ENCODE measurements at regions of chr21 and their contacts with region 1.

Region 1: GRCh38 chr21:35520302-35520701 is 471.2 kb upstream of the RUNX1 start:
- DNase-seq: no peak
- H3K4me3 ChIP-seq: no peak overlapping the region
- CTCF ChIP-seq: no peak

Region 2: DNA sequence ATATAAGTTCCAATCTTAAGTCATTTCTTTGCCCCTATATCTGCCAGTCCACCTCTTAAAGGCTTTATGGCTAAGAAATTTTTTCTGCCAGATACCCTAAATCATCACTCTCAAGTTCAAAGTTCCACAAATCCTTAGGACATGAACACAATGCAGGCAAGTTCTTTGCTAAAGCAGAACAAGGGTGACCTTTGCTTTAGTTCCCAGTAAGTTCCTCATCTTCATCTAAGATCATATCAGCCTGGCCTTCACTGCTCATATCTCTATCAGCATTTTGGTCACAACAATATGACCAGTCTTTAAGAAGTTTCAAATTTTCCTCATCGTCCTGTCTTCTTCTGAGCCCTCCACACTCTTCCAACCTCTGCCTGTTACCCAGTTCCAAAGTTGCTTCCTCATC is 69.0 kb before region 1 on chr21:
- in situ Hi-C with region 1: loop called (anchors 5 kb)
- DNase-seq: no peak
- H3K4me3 ChIP-seq: no peak overlapping the region
- CTCF ChIP-seq: no peak

Region 3: DNA sequence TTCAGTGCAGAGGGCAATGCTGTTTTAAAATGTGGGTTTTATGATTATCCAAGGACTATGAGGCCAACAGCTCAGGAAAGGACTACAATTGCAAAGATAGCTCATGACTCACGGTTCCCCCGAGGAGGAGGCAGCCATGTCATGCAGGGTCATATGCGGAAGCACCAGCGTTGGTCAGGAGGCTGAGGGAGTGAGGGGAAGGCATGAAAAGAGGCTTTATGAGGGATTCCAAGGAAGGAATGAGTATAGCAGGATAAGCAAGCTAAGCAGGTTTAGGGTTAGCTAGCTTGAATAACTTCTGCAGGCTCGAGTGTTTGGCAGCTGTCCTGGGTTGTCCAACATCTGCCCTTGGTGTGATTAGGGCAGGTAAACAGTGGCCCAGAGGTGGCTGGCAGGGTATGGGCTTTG is 44.9 kb after region 1 on chr21:
- in situ Hi-C with region 1: loop called (anchors 5 kb)
- DNase-seq: peak; percentile 70
- H3K4me3 ChIP-seq: no peak overlapping the region
- CTCF ChIP-seq: no peak

Region 4: DNA sequence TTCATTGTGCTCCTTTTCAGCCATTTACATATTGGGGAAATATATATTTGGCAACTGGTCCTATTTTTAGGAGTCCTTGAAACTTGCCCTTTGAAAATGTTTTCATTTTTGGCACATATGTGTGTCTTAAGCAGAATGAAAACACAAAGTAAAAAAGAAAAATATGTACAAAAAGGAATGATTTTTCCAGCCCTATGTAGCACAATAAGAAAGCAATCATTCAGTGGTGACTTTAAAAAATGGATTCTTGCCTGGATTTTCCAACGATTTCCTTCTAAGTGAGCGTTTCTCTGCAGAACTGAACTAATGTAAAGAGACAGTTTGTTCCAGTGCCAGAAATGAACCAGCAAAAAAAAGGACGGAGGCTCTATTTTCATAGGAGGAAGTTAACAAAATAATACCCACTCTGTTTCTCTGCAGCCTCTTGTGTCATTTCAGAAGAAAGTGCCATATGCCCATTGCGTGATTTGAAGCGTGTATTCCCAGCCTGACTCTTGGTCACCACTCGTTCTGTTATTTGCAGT is 200.0 kb after region 1 on chr21:
- in situ Hi-C with region 1: no loop called
- DNase-seq: no peak
- H3K4me3 ChIP-seq: no peak overlapping the region
- CTCF ChIP-seq: no peak